ENCODE measurements at regions of chr17 and their contacts with region 1.

Region 1: GRCh38 chr17:47199627-47200324 is 9.4 kb upstream of the MYL4 start:
- DNase-seq: no peak
- H3K4me3 ChIP-seq: no peak overlapping the region
- H3K27ac ChIP-seq: no peak overlapping the region
- H3K4me1 ChIP-seq: peaks cover 5% of the 10 kb centered on the region
- H3K27me3 ChIP-seq: no peaks in the 10 kb centered on the region
- CTCF ChIP-seq: no peak

Region 2: DNA sequence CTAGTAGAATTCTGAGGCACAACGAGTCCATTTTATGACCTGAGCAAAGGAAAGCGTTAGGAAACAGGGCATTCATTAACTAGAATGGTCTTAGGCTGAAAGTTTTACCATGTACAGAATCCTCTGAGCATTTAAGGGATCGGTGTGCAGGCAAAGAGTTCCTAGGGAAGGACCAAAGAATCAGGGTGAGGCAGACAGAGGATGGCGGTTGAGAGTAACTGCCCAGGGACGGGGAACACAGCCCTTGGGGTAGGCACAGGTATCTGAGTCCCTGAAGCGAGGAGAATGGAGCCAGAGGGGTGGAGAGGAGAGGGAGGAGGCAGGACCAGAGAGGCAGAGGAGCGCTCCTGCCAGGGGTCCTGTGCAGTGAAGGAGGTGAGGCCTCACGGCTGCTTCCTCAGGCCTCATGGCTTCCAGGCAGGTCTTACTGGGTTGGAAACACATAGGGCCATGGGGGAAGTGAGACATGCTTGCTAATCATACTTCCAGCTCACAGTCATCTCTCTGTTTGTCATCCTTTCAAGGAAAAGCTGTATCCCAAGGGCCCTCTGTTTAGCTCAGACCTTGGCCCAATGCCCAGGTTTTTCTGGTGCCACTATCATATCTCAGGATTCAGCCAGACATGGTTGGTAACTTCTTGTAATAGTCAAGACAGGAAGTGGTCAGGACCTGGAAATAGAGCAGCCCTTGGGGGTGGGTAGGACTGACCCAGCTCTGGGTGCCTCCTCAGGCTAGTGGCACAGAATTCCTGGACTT is 40.0 kb after region 1 on chr17:
- CTCF ChIA-PET with region 1: no interaction called
- dilution Hi-C with region 1: loop called (anchors 5 kb)
- in situ Hi-C with region 1: no loop called
- intact Hi-C with region 1: no loop called
- DNase-seq: peak; percentile 96
- H3K4me3 ChIP-seq: no peak overlapping the region
- H3K27ac ChIP-seq: peak overlapping the region; percentile 6
- H3K4me1 ChIP-seq: peaks cover 16% of the 10 kb centered on the region
- H3K27me3 ChIP-seq: no peaks in the 10 kb centered on the region
- CTCF ChIP-seq: no peak

Measured in mammary epithelial cell (primary cell).